GM12878 (cell line): ENCODE measurements at regions of chr19 and their contacts with region 1.

Region 1: GRCh38 chr19:3100081-3100864 is 6.1 kb downstream of the GNA11 start:
- DNase-seq: no peak
- ATAC-seq: no peak
- H3K4me3 ChIP-seq: no peak overlapping the region
- H3K27ac ChIP-seq: no peak overlapping the region
- H3K4me1 ChIP-seq: peaks cover 11% of the 10 kb centered on the region
- H3K27me3 ChIP-seq: no peaks in the 10 kb centered on the region; a peak in 2 of 4 replicates
- CTCF ChIP-seq: no peak
- EP300 ChIP-seq: no peak
- POLR2A ChIP-seq: no peak
- RAD21 ChIP-seq: no peak

Region 2: DNA sequence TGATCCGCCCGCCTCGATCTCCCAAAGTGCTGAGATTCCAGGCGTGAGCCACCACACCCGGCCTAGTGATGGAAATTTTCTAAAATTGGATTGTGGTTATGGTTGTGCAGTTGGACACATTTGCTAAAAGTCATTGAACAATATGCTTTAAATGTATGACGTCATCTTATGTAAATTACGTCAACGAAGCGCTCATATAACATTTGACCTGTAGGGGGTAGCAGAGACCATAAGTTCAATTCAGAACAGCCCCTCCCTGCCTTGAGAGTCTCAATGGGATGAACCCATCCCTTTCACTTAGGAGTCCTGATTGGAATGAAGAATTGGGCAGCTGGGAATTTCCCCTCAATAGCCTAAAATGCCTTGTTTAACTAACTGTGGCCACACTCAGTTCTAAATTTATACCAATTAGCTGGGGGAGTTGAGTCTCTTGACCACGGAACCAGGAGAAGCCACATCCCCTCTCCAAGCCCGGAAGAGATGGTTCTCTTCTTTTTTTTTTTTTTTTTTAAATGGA is 138.2 kb before region 1 on chr19:
- CTCF ChIA-PET with region 1: interaction called, 33 read pairs
- POLR2A ChIA-PET with region 1: no interaction called
- RAD21 ChIA-PET with region 1: interaction called, 10 read pairs
- SMC1A ChIA-PET with region 1: interaction called, 9 read pairs
- in situ Hi-C with region 1: loop called (anchors 5 kb)
- intact Hi-C with region 1: no loop called
- DNase-seq: peak; percentile 65
- ATAC-seq: peak; percentile 78
- H3K4me3 ChIP-seq: no peak overlapping the region
- H3K27ac ChIP-seq: no peak overlapping the region
- H3K4me1 ChIP-seq: peaks cover 4% of the 10 kb centered on the region; the same call in 1 of the 2 replicates
- H3K27me3 ChIP-seq: no peaks in the 10 kb centered on the region
- CTCF ChIP-seq: peak; percentile 63 to 94 (median 65); a peak in 5 of 6 replicates
- EP300 ChIP-seq: no peak
- POLR2A ChIP-seq: no peak
- RAD21 ChIP-seq: peak; percentile 82

Region 3: DNA sequence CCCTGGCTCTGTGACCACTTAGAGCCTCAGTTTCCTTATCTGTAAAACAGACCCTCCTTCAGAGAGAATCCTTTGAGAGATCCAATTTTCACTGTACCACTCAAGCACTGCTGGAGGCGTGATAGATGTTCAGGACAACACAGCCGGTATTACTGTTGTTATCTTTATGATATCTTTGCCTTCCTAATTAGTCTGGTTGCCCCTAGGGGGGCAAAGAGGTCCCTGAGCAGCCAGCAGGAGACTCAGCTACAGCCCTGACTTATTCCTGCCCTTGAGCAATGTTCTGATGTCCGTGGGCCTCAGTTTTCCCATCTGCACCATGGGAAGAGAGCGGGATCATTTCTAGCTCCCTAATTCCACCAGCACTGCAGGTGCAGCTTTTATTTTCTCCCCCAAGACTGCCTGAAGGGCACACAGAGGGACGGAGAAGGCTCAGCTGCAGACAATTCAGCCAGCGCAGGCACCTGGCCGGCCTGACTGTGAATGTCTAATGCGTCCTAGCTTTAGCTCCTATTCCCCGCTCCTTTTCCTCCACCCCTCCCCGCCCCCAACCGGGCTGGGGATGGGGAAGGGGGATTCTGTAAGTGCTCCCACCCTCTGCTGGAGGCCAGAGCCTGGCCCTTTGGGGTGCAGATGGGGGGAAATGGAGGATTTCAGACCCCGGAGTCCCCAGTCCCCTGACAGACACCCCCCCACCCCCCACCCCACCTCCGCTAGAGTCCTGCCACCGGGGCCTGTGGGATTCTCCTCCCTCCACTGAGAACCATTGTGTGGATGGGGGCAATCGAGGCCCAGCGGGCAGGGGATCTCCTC is 54.2 kb before region 1 on chr19:
- CTCF ChIA-PET with region 1: no interaction called
- POLR2A ChIA-PET with region 1: no interaction called
- RAD21 ChIA-PET with region 1: no interaction called
- SMC1A ChIA-PET with region 1: no interaction called
- in situ Hi-C with region 1: no loop called
- intact Hi-C with region 1: no loop called
- DNase-seq: no peak
- ATAC-seq: 0 out of 3 replicates have a peak, but pooled peaks have one; percentile 18
- H3K4me3 ChIP-seq: no peak overlapping the region
- H3K27ac ChIP-seq: no peak overlapping the region
- H3K4me1 ChIP-seq: no peaks in the 10 kb centered on the region
- H3K27me3 ChIP-seq: peaks cover 0 to 3% of the 10 kb centered on the region in 2 experiments; a peak in 1 of 4 replicates
- CTCF ChIP-seq: no peak
- EP300 ChIP-seq: no peak
- POLR2A ChIP-seq: no peak
- RAD21 ChIP-seq: no peak

Region 4: GRCh38 chr19:3266792-3267514 is 166.7 kb after region 1 on chr19:
- CTCF ChIA-PET with region 1: no interaction called
- POLR2A ChIA-PET with region 1: no interaction called
- RAD21 ChIA-PET with region 1: no interaction called
- SMC1A ChIA-PET with region 1: no interaction called
- in situ Hi-C with region 1: no loop called
- intact Hi-C with region 1: no loop called
- DNase-seq: no peak
- ATAC-seq: no peak
- H3K4me3 ChIP-seq: no peak overlapping the region
- H3K27ac ChIP-seq: no peak overlapping the region
- H3K4me1 ChIP-seq: no peaks in the 10 kb centered on the region
- H3K27me3 ChIP-seq: no peaks in the 10 kb centered on the region; a peak in 1 of 4 replicates
- CTCF ChIP-seq: no peak
- EP300 ChIP-seq: no peak
- POLR2A ChIP-seq: no peak
- RAD21 ChIP-seq: no peak

Region 5: DNA sequence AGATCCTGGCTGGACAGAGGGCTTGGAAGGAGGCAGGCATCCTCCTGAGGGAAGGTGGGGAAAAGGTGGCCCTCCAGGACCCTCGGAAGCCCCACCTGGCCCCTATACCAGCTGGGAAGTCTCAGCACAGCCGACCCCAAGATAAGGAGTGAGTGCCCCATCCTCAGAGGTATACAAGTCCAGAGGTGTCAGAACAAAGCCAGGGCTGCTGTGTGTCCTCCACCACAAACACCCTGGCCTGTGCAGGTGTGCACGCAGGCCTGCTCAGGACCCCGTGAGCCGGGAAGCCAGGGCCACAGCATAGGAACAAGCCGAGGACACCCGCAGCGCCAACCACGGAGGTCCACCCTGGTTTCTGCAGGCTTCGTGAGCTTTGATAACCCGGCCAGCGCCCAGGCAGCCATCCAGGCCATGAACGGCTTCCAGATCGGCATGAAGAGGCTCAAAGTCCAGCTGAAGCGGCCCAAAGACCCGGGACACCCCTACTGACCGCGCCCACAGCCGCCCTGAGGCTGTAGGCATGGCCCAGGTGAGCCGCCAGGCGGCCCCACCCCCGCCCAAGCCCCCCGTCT is 192.8 kb after region 1 on chr19:
- CTCF ChIA-PET with region 1: no interaction called
- POLR2A ChIA-PET with region 1: no interaction called
- RAD21 ChIA-PET with region 1: no interaction called
- SMC1A ChIA-PET with region 1: no interaction called
- in situ Hi-C with region 1: no loop called
- intact Hi-C with region 1: no loop called
- DNase-seq: no peak
- ATAC-seq: no peak
- H3K4me3 ChIP-seq: no peak overlapping the region
- H3K27ac ChIP-seq: no peak overlapping the region
- H3K4me1 ChIP-seq: no peaks in the 10 kb centered on the region
- H3K27me3 ChIP-seq: peaks cover 5 to 6% of the 10 kb centered on the region in 2 experiments; a peak in 3 of 4 replicates
- CTCF ChIP-seq: no peak
- EP300 ChIP-seq: no peak
- POLR2A ChIP-seq: no peak
- RAD21 ChIP-seq: no peak